ENCODE measurements at regions of chr18 and their contacts with region 1.

Region 1: DNA sequence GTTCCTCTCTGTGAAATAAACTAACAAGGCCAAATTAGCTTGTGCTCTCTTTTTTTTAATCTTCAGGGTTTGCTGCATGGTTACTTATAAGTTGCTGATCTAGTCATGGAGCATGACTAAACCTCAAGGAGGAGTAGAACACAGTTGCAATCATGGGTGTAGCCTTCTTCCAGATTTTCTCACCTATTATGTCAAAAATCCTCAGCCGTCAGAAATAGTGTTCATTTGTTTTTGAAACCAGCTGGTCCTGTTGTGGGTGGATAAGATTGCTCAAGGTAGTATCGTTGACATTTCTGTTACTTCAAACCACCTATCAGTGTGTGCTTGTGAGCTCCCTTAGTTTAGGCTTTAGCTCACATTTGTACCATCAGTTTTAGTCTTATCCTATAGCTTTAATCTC is 11.2 kb downstream of the RELCH start:
- DNase-seq: no peak
- H3K4me3 Mint-ChIP-seq: no peak overlapping the region
- H3K27ac Mint-ChIP-seq: no peak overlapping the region
- H3K4me1 Mint-ChIP-seq: peaks cover 56% of the 10 kb centered on the region
- H3K27me3 Mint-ChIP-seq: no peaks in the 10 kb centered on the region

Region 2: GRCh38 chr18:61765097-61765496 is 433.2 kb before region 1 on chr18:
- CTCF ChIA-PET with region 1: no interaction called
- POLR2A ChIA-PET with region 1: no interaction called
- intact Hi-C with region 1: no loop called
- DNase-seq: no peak
- H3K4me3 Mint-ChIP-seq: no peak overlapping the region
- H3K27ac Mint-ChIP-seq: no peak overlapping the region
- H3K4me1 Mint-ChIP-seq: peaks cover 14% of the 10 kb centered on the region
- H3K27me3 Mint-ChIP-seq: peaks cover 3% of the 10 kb centered on the region

Region 3: GRCh38 chr18:62186774-62187542 is 11.3 kb before region 1 on chr18 and contains the starts of genes PIGN and RELCH:
- CTCF ChIA-PET with region 1: interaction called, 8 read pairs
- POLR2A ChIA-PET with region 1: interaction called, 9 read pairs
- intact Hi-C with region 1: loop called (anchors 1 kb)
- DNase-seq: peak; percentile 97
- H3K4me3 Mint-ChIP-seq: peak within 1 kb of the TSS; percentile 99
- H3K27ac Mint-ChIP-seq: peak within 1 kb of the TSS; percentile 93
- H3K4me1 Mint-ChIP-seq: peaks cover 51% of the 10 kb centered on the region
- H3K27me3 Mint-ChIP-seq: no peaks in the 10 kb centered on the region
- total RNA-seq, gene PIGN: 26.2 to 27.8 TPM
- total RNA-seq, gene RELCH: 16.1 to 17.7 TPM

Region 4: GRCh38 chr18:62784966-62785413 is 586.7 kb after region 1 on chr18:
- CTCF ChIA-PET with region 1: no interaction called
- POLR2A ChIA-PET with region 1: no interaction called
- intact Hi-C with region 1: loop called (anchors 10 kb)
- DNase-seq: no peak
- H3K4me3 Mint-ChIP-seq: no peak overlapping the region
- H3K27ac Mint-ChIP-seq: peak overlapping the region; percentile 73
- H3K4me1 Mint-ChIP-seq: peaks cover 52% of the 10 kb centered on the region
- H3K27me3 Mint-ChIP-seq: peaks cover 3% of the 10 kb centered on the region

Measured in activated CD4-positive, alpha-beta memory T cell treated with anti-CD3 and anti-CD28 coated beads for 36 hours (primary cell).